ENCODE measurements at regions of chr1 and their contacts with region 1.

Region 1: DNA sequence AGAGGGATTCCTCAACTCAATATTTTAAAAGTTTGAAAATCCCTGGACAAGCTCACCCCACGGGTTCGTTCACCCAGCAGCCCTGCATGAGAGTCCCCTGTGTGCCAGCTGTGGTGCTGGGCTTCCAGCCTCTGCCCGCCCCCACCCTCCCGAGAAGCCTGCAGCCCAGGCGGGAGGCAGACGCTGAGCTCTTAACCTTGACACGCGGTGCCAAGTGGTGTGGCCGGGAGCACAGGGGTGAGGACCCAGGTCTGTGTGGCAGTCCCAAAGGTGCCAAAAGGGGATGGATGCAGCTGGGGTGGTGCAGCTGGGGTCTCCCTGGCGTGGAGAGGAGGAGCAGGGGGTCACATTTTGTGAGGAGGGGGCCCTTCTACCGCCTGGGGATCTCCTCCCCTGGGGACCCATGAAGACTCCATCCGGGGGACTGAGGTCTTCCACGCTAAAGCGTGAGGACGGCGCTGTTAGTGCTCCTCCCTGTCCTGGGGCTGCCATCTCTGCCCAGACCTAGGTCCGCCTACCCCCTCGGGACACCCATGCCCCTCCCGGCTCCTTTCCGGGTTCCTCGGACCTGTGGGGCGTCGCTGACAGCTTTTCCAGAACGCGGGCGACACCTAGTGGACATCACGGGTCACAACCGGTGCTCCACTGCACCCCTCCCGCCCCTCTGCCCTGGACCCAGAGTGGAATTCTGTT is 12.9 kb downstream of the PLA2G2F start:
- DNase-seq: no peak
- H3K4me3 ChIP-seq: peak overlapping the region; percentile 52
- CTCF ChIP-seq: peak; percentile 94

Region 2: GRCh38 chr1:19918057-19918456 is 234.0 kb before region 1 on chr1:
- CTCF ChIA-PET with region 1: interaction called, 137 read pairs
- POLR2A ChIA-PET with region 1: no interaction called
- DNase-seq: peak; percentile 49
- H3K4me3 ChIP-seq: no peak overlapping the region
- CTCF ChIP-seq: peak; percentile 86

Region 3: DNA sequence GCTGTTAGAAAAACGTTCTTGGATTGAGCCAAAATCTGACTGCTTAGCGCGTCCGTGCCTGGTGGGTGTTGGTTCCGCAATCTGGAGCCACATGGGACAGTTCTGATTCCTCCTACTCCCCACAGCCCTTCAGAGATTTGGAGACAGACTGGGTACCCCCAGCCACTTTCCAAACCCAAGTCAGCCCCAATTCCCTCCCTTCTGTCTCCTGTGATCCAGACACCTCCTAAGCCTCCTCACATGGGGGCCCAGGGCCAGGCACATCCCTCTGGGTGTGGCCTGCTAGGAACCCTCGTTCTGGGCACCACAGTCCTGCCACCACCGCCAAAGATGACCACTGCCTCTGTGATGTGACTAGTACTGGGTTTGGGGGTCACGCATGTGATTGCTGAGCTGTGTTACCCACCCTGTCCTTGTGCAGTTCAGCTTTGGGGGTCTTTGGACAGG is 77.3 kb before region 1 on chr1:
- CTCF ChIA-PET with region 1: no interaction called
- POLR2A ChIA-PET with region 1: no interaction called
- DNase-seq: no peak
- H3K4me3 ChIP-seq: no peak overlapping the region
- CTCF ChIP-seq: no peak

Region 4: GRCh38 chr1:20093940-20094391 is 58.1 kb before region 1 on chr1:
- CTCF ChIA-PET with region 1: interaction called, 36 read pairs
- POLR2A ChIA-PET with region 1: no interaction called
- DNase-seq: no peak
- H3K4me3 ChIP-seq: no peak overlapping the region
- CTCF ChIP-seq: no peak

Region 5: GRCh38 chr1:20165522-20165951 is 13.5 kb after region 1 on chr1:
- CTCF ChIA-PET with region 1: interaction called, 32 read pairs
- POLR2A ChIA-PET with region 1: no interaction called
- DNase-seq: no peak
- H3K4me3 ChIP-seq: no peak overlapping the region
- CTCF ChIP-seq: peak; percentile 10

Region 6: DNA sequence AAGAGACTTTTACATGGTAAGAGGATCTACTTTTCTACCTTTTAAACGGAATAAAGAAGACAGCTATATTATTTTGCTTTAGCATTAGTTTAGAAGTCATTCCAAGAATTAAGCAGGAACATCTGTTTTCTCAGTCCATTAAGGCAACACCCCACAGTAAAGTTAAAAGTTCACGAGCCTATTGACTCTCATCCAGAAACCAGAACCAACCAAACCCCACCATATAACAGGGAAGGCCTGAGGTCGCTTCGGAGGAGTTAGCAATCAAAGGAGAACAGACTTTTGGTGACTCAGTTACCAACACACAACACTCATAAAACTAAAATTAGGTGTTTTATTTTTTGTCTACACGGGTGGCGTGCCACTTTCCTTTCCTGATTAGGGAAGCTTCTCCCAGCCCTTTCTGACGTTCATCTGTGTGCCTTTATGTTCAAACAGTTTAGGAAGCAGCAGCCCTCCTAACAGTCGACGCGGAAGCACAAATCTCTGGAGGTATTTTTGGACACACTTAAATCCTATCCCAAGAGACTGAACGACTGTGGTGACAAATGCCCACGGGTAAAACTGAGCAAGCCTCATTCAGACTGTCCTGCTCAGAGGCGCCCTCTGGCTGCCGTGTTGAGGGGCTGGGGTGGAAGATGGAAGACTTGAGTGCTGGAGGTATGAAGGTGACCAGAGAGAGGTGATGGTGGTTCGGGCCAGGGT is 42.9 kb after region 1 on chr1:
- CTCF ChIA-PET with region 1: interaction called, 29 read pairs
- POLR2A ChIA-PET with region 1: no interaction called
- DNase-seq: no peak
- H3K4me3 ChIP-seq: no peak overlapping the region
- CTCF ChIP-seq: peak; percentile 85

Region 7: GRCh38 chr1:20462397-20462796 is 310.3 kb after region 1 on chr1:
- CTCF ChIA-PET with region 1: no interaction called
- POLR2A ChIA-PET with region 1: no interaction called
- DNase-seq: no peak
- H3K4me3 ChIP-seq: no peak overlapping the region
- CTCF ChIP-seq: no peak